ENCODE measurements at regions of chr5 and their contacts with region 1.

Region 1: DNA sequence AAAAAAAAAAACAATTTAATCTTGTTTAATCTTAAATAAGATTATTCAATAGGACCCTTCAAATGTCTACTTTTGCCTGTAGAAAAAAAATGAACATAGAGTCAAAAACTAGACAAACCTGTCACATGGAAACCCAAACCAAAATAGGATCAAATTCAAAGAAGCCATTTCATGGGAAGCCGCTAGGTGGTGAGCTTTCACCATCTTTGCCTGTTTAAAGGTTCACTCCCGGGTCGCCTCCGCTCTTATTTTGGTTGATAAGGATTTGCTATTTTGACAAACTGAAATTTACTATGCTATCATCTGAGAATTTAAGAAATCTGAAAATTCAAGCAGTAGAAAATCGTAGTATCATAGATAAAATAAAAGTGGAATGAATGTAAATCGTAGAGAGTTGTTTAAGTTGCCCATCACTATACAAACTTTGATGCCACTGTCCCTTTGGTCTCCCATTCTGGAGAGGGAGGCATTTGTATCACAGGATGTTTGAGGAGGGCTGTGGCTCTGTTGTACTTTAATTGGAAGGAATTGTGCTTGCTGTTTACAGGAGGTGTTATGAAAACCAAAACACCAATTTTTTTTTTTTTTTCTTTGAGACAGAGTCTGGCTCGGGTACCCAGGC is 43.5 kb upstream of the DNAH5 start:
- DNase-seq: peak; percentile 45 to 77
- H3K4me3 ChIP-seq: no peak overlapping the region
- H3K27ac ChIP-seq: no peak overlapping the region
- H3K4me1 ChIP-seq: peaks cover 0 to 7% (median 2%) of the 10 kb centered on the region in 4 donors
- H3K27me3 ChIP-seq: peaks cover 0 to 17% (median 0%) of the 10 kb centered on the region in 3 donors
- CTCF ChIP-seq: peak in 5 of 7 experiments; percentile 63 to 88 (median 82)
- EP300 ChIP-seq: no peak
- POLR2A ChIP-seq: no peak

Region 2: DNA sequence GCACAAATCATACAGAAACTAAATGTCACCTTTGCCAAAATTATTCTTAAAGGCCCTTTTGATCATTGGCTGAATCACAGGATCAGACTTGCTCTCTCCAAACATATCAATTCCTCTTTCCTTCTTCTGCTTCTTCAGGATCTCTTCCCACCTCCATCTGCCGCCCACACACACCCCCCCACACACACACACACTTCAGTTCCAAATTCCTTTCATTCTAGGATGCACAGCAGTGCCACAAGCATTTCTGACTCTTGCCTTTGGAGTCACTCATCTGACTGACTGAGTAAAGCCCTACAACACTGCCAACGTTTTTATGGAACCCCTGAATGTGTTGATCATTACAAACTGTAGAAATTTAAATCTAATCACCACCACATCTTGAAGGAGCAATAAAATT is 66.4 kb before region 1 on chr5:
- intact Hi-C with region 1: no loop called
- DNase-seq: no peak
- H3K4me3 ChIP-seq: no peak overlapping the region
- H3K27ac ChIP-seq: no peak overlapping the region
- H3K4me1 ChIP-seq: no peaks in the 10 kb centered on the region
- H3K27me3 ChIP-seq: no peaks in the 10 kb centered on the region
- CTCF ChIP-seq: no peak
- EP300 ChIP-seq: no peak
- POLR2A ChIP-seq: no peak

Region 3: GRCh38 chr5:14108170-14108996 is 120.4 kb after region 1 on chr5:
- intact Hi-C with region 1: loop called (anchors 10 kb)
- DNase-seq: peak; percentile 71 to 86
- H3K4me3 ChIP-seq: peak overlapping the region; percentile 23 to 33 (median 26)
- H3K27ac ChIP-seq: peak overlapping the region in 3 of 5 donors; percentile 29 to 59 (median 35)
- H3K4me1 ChIP-seq: peaks cover 0 to 19% (median 14%) of the 10 kb centered on the region in 4 donors
- H3K27me3 ChIP-seq: no peaks in the 10 kb centered on the region
- CTCF ChIP-seq: peak in 5 of 7 experiments; percentile 29 to 86 (median 75)
- EP300 ChIP-seq: no peak
- POLR2A ChIP-seq: no peak

Region 4: DNA sequence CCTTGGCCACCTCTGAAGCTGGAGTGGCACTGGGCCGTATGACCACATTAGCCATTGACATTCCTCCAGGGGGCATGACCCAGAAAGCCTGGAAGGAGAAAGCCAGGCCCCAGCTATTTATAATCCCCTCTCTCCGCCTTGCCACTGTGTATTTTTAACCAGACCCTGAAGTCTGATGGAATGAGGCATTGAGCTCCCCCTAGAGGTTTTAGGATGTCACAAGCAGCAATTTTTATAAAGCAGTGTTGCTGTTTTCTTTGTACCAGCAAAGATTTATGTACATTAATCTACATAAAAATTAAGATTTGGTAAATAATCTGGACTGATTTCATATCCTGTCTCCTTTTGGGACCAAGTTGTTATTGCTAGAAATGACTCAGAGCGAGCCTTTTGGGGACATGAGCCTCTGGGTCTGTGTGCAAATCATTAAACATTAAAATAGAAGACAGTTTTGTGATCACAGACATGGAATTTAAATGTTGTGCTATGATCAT is 282.3 kb after region 1 on chr5:
- intact Hi-C with region 1: loop called (anchors 10 kb)
- DNase-seq: peak in 1 of 2 donors; percentile 84
- H3K4me3 ChIP-seq: no peak overlapping the region
- H3K27ac ChIP-seq: peak overlapping the region in 4 of 5 donors; percentile 52 to 71 (median 70)
- H3K4me1 ChIP-seq: peaks cover 19 to 65% (median 45%) of the 10 kb centered on the region in 4 donors
- H3K27me3 ChIP-seq: no peaks in the 10 kb centered on the region
- CTCF ChIP-seq: peak in 5 of 7 experiments; percentile 40 to 75 (median 60)
- EP300 ChIP-seq: no peak
- POLR2A ChIP-seq: no peak

Region 5: DNA sequence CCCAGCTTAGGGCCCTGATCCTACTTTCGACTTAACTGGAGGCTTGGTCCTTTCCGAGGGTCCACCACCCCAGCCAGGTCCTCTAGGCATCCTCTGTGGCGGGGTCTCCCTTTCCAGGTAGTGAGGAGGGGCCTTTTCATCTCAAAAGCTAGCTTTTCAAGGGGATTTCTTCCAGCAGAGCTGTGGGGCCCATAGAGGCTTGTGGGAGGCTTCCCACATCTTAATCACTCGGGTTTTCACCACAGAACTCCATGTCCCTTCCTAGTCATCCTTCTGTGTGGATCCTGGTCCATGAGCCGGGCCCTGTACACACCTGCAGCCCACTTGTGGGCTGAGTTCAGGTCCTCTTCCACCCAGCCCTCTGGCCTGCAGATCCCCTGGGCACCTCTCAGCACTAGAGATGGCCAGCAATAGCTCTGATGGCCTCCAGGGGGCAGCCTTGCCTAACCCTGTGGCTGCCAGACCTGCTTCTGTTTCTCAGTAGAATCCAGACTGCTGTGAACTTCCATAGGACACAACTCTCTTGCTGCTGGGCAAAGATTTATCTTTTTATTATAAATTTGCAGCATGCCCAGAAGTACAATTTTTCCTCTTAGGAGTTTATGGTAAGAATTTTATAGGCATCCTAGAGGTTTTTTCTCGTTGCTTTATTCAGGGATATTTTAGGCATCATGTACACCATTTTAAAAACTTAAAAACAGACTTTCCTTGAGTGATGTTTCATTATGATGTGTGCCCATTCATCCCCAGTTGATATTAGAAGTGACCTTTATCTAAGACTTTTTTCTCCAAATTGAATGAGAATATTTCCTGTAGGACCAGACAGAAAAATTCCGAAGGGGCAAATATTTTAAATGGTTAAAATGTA is 364.1 kb after region 1 on chr5:
- intact Hi-C with region 1: loop called (anchors 10 kb)
- DNase-seq: peak; percentile 67 to 90
- H3K4me3 ChIP-seq: no peak overlapping the region
- H3K27ac ChIP-seq: no peak overlapping the region
- H3K4me1 ChIP-seq: peaks cover 0 to 50% (median 16%) of the 10 kb centered on the region in 4 donors
- H3K27me3 ChIP-seq: no peaks in the 10 kb centered on the region
- CTCF ChIP-seq: peak in 5 of 7 experiments; percentile 42 to 93 (median 92)
- EP300 ChIP-seq: no peak
- POLR2A ChIP-seq: no peak